Left cardiac atrium (tissue), 4 donors: ENCODE measurements at regions of chrX and their contacts with region 1.

Region 1: DNA sequence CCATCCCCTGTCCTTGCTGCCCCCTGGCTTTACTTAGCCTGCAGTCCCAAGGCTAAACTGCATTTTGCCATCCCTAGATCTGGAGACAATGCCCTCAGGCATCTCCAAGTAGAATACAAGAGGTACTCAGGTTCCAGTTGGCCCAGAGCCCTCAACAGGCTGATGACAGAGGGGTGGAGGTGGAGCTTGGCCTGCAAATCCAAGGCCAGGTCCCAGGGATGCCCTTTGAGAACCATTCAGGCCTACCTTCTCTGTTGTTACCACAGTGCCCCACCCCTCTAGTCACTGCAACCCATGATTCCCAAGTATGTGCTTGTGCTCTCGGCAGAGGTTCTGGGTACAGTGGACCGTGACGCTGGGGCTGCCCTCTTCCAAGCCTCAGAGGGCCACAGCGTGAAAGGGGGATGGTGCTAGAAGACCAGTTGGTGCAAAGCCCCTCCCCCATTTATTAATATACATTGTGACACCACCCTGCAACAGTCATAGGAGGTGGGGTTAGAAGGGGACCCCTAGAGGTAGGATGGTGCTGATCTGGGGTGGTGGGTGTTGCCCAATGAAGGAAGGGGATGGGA is 6.4 kb upstream of the UBA1 start:
- DNase-seq: peak; percentile 7
- ATAC-seq: no peak

Region 2: GRCh38 chrX:47815901-47816845 is 629.0 kb after region 1 on chrX:
- intact Hi-C with region 1: loop called in 1 of 2 experiments (anchors 10 kb)
- DNase-seq: no peak
- ATAC-seq: peak in 1 of 2 donors; percentile 29